H1 (cell line): ENCODE measurements at regions of chr6 and their contacts with region 1.

Region 1: DNA sequence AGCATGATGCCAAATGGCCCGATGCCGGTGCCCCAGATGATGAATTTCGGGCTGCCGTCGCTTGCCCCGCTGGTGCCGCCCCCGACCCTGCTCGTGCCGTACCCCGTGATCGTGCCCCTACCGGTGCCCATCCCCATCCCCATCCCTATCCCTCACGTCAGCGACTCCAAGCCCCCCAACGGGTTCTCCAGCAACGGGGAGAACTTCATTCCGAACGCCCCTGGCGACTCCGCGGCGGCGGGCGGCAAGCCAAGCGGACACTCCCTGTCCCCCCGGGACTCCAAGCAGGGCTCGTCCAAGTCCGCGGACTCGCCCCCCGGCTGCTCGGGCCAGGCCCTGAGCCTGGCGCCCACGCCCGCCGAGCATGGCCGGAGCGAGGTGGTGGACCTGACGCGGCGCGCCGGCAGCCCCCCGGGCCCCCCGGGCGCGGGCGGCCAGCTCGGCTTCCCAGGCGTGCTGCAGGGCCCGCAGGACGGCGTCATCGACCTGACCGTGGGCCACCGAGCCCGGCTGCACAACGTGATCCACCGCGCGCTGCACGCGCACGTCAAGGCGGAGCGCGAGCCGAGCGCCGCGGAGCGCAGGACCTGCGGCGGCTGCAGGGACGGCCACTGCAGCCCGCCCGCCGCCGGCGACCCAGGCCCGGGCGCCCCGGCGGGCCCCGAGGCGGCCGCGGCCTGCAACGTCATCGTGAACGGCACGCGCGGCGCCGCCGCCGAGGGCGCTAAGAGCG is 144.6 kb downstream of the SOBP start:
- DNase-seq: no peak
- H3K4me3 ChIP-seq: peak overlapping the region; percentile 16 to 57 (median 22); a peak in 7 of 8 replicates
- H3K27ac ChIP-seq: no peak overlapping the region
- H3K4me1 ChIP-seq: peaks cover 0 to 2% (median 1%) of the 10 kb centered on the region in 4 experiments; a peak in 2 of 7 replicates
- H3K27me3 ChIP-seq: peaks cover 1 to 20% (median 9%) of the 10 kb centered on the region in 4 experiments; a peak in 6 of 7 replicates
- CTCF ChIP-seq: no peak
- EP300 ChIP-seq: no peak
- POLR2A ChIP-seq: no peak
- RAD21 ChIP-seq: no peak

Region 2: GRCh38 chr6:107318100-107318736 is 316.3 kb before region 1 on chr6:
- CTCF ChIA-PET with region 1: interaction called, 17 read pairs
- POLR2A ChIA-PET with region 1: no interaction called
- DNase-seq: peak; percentile 27 to 51
- H3K4me3 ChIP-seq: no peak overlapping the region
- H3K27ac ChIP-seq: no peak overlapping the region
- H3K4me1 ChIP-seq: no peaks in the 10 kb centered on the region; a peak in 1 of 7 replicates
- H3K27me3 ChIP-seq: no peaks in the 10 kb centered on the region
- CTCF ChIP-seq: peak; percentile 53 to 79 (median 78)
- EP300 ChIP-seq: no peak
- POLR2A ChIP-seq: no peak
- RAD21 ChIP-seq: peak; percentile 91 to 93

Region 3: GRCh38 chr6:107459283-107460082 is 175.0 kb before region 1 on chr6 and contains the start of gene PDSS2:
- CTCF ChIA-PET with region 1: interaction called, 13 read pairs
- POLR2A ChIA-PET with region 1: no interaction called
- DNase-seq: peak; percentile 89 to 95
- H3K4me3 ChIP-seq: peak within 1 kb of the TSS; percentile 90 to 100 (median 95)
- H3K27ac ChIP-seq: peak within 1 kb of the TSS; percentile 70
- H3K4me1 ChIP-seq: peaks cover 0 to 3% (median 1%) of the 10 kb centered on the region in 4 experiments; a peak in 2 of 7 replicates
- H3K27me3 ChIP-seq: no peaks in the 10 kb centered on the region
- CTCF ChIP-seq: peak; percentile 52 to 64 (median 56)
- EP300 ChIP-seq: no peak
- POLR2A ChIP-seq: peak; percentile 58 to 85
- RAD21 ChIP-seq: peak; percentile 43; a peak in 3 of 4 replicates
- total RNA-seq, gene PDSS2: 15.6 and 16.1 TPM in 2 replicates

Region 4: DNA sequence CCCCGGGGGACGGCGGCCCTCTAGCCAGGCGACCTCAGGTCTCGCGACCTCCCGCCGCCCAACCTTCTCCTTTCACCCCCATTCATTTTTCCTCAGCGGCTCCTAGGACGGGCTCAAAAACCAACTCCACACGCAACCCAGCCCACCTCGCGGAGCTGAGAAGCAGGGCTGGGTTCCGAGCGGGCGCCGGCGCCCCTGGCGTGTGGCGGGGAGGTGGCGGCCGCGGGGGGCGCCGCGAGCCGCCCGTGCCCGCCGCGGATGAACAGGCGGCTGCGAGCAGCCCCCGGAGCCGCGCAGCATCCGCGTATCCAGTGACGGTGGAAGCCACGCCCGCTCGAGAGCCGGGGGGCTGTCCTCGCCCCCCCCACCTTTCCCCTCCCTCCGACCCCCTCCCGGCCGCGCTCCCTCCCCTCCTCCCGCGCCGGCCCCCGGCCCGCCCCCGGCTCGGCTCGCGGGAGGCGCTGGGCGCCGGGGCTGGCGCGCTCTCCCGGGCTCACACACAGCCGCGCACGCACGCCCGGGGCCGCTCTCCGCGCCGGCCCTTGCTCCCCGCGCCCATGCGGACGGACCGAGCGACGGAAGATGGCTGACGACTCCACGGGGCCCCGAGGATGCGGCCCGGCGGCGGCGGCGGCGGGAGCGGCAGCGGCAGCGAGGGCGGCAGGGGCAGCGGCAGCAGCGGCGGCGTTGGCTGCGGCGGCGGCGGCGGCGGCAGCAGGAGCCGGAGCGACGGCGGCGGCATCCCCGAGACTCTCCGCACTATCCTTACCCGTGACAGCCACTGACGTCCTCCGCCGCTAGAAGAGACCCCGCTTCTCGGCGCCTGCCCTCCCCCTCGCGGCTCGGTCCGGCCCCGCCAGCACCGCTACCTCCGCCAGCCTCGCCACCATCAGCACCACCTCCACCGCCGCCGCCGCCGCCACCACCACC is 144.6 kb before region 1 on chr6 and contains the start of gene SOBP:
- CTCF ChIA-PET with region 1: interaction called, 10 read pairs
- POLR2A ChIA-PET with region 1: no interaction called
- DNase-seq: peak in 1 of 2 experiments; percentile 73
- H3K4me3 ChIP-seq: peak within 1 kb of the TSS; percentile 63 to 91 (median 86)
- H3K27ac ChIP-seq: no peak within 1 kb of the TSS
- H3K4me1 ChIP-seq: peaks cover 0 to 14% (median 10%) of the 10 kb centered on the region in 4 experiments; a peak in 6 of 7 replicates
- H3K27me3 ChIP-seq: peaks cover 10 to 43% (median 27%) of the 10 kb centered on the region in 4 experiments
- CTCF ChIP-seq: no peak
- EP300 ChIP-seq: no peak
- POLR2A ChIP-seq: no peak
- RAD21 ChIP-seq: no peak
- total RNA-seq, gene SOBP: 6.2 and 7.4 TPM in 2 replicates

Region 5: DNA sequence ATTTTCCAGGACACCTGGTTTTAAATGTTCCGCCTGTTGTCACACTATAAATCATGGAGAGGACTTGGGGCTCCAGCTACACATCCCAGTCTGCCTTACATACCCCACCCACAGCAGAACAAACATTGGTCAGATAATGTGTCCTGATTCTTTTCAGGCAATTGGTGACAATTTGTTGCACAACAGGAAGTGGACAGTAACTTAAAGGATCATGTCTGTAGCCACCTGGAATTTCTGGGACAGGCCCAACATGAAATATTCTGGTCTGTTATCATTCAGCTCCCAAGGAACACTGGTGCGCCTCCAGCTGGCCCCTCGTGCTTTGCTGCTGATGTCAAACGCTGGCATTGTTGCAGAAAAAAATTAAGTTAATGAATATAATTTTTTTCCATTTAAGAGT is 27.4 kb before region 1 on chr6:
- CTCF ChIA-PET with region 1: interaction called, 14 read pairs
- POLR2A ChIA-PET with region 1: no interaction called
- DNase-seq: no peak
- H3K4me3 ChIP-seq: no peak overlapping the region
- H3K27ac ChIP-seq: no peak overlapping the region
- H3K4me1 ChIP-seq: peaks cover 9 to 41% (median 29%) of the 10 kb centered on the region in 4 experiments
- H3K27me3 ChIP-seq: no peaks in the 10 kb centered on the region; a peak in 1 of 7 replicates
- CTCF ChIP-seq: no peak
- EP300 ChIP-seq: no peak
- POLR2A ChIP-seq: no peak
- RAD21 ChIP-seq: no peak

Region 6: DNA sequence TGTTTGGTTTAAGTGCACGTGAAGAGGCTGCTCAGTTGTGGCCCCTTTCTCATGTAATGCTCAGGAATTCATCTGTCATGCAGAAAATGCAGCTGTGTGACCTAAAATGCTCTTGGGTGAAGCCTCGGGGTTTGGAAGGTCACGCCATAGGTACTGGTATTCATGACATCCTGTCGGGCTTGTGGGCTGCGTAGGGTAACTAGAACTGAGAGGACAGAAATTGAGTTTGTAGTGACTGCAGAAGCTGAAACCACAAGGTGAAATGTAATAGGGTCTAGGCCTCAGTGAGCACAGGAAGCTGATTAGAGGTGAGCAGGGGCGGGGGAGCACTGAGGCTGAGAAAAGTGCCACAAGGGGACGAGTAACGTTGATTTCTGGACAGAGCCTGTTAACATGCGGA is 15.8 kb before region 1 on chr6:
- CTCF ChIA-PET with region 1: interaction called, 9 read pairs
- POLR2A ChIA-PET with region 1: interaction called, 12 read pairs
- DNase-seq: no peak
- H3K4me3 ChIP-seq: no peak overlapping the region
- H3K27ac ChIP-seq: no peak overlapping the region
- H3K4me1 ChIP-seq: peaks cover 8 to 25% (median 24%) of the 10 kb centered on the region in 4 experiments
- H3K27me3 ChIP-seq: no peaks in the 10 kb centered on the region
- CTCF ChIP-seq: no peak
- EP300 ChIP-seq: no peak
- POLR2A ChIP-seq: no peak
- RAD21 ChIP-seq: no peak

Region 7: GRCh38 chr6:107647439-107647948 is 13.0 kb after region 1 on chr6:
- CTCF ChIA-PET with region 1: interaction called, 14 read pairs
- POLR2A ChIA-PET with region 1: no interaction called
- DNase-seq: no peak
- H3K4me3 ChIP-seq: no peak overlapping the region
- H3K27ac ChIP-seq: no peak overlapping the region
- H3K4me1 ChIP-seq: no peaks in the 10 kb centered on the region
- H3K27me3 ChIP-seq: no peaks in the 10 kb centered on the region
- CTCF ChIP-seq: no peak
- EP300 ChIP-seq: no peak
- POLR2A ChIP-seq: no peak
- RAD21 ChIP-seq: no peak